Cardiac septum (tissue), 1 donor: ENCODE measurements at regions of chr1 and their contacts with region 1.

Region 1: DNA sequence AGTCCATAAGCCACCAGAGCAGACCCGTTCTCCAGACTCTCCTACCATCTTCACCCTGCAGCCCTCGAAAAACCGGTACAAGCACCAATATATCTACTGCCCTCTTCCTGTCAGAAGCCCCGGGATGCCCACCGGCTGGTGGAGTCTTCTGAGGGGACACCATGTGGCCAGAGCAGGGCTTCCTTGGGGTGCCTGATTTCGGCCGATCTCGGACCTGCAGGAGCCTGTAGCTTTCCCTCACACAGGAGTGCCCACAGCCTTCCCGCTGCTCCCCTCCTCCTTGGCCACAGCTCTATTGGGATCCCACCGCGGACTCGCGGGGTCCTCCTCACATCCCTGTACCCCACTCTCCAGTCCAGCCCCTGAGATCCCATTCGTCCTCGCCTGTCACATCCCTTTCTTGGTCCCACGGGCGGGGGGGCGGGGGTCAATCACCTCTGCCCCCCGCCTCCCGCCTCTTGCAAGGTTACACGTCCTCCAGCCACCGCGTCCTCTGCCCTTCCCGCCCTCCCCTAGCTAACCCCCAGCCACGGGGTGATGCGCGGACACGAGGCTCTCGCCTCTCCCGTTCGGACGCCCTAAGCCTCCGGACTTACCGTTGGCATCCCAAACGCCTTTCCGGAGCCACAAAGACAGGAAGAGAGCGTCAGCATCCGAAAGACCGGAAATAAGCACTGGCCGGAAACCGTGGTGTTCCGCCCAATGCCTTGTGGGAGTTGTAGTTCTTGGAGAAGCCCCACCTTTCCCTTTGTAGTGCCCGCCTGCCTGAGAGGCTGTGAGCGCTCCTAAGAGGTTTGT is at the start of gene SSR2:
- DNase-seq: peak; percentile 96
- total RNA-seq, gene SSR2: 81.2 TPM

Region 2: DNA sequence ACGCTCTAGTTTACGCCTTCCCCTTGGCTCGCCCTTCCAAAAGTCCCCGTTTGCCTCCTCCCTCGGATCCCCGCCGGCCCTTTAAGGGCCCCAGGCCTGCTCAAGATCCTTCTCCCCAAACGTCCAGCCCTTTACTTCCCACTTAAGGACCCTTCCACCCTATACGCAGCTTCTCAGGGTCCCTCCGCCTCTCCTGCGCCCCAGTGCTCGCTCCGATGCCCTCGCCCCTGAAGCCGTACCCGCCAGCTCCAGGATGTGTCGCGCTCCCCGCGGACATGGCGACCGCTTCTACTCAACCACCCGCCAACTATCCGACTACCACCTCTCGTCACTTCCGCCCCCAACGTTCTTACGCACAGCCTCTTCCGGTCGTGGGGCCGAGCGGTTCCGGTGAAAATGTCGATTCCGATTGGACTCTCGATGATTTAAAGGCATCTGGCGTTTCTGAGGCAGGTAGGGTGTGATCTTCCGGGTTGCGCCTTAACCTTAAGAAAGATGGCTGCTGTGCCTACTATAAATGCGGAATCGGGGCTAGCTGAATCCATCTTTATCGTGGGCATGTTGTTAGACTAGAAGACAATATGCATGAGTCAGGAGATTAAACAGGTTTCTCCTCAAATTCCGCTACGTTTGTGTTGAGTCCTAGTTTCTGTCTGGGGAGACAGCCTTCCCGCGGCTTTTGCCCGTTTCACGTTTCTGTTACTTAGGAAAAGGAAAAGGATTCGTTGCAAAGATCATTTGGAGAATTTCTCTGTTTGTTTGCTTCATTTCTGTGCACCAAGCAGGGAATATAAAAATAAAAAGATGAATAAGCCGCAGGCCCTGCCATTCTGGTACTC is 86.2 kb before region 1 on chr1 and contains the start of gene KHDC4:
- intact Hi-C with region 1: no loop called
- DNase-seq: peak; percentile 97
- total RNA-seq, gene KHDC4: 26.8 TPM

Region 3: DNA sequence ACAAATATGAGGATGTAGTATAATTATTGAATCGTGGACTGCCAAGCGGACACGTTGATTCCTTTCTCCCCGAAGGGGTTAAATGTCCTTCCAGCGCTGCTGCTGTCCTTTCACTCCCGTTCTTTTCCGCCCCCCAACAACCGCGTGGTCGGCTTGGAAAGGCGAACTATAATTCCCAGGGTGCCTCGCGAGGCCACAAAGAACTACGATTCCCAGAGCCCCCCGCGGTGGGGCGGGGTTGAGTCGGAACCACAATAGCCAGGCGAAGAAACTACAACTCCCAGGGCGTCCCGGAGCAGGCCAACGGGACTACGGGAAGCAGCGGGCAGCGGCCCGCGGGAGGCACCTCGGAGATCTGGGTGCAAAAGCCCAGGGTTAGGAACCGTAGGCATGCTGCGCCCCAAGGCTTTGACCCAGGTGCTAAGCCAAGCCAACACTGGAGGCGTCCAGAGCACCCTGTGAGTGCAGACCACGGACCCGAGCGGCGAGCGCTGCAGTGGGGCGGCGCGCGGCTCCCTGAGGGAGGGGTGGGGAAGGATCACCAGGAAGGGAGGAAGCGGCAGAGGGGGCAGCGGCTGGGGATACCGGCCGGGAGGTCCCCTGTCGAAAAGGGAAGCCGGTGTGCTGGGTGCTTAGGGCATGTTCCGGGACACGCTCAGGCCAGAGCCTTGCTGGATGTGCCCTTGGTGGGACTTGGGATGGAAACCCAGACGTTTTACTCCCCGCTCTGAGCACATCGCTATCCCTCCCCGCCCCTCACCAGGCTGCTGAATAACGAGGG is 34.2 kb after region 1 on chr1 and contains the start of gene LAMTOR2:
- intact Hi-C with region 1: loop called (anchors 2 kb)
- DNase-seq: peak; percentile 99
- total RNA-seq, gene LAMTOR2: 49.8 TPM